ENCODE measurements at regions of chr3 and their contacts with region 1.

Region 1: GRCh38 chr3:187738331-187739093 is 6.8 kb downstream of the BCL6 start:
- DNase-seq: peak; percentile 85
- H3K4me3 Mint-ChIP-seq: peak overlapping the region; percentile 86
- H3K27ac Mint-ChIP-seq: peak overlapping the region; percentile 97
- H3K4me1 Mint-ChIP-seq: peaks cover 35% of the 10 kb centered on the region
- H3K27me3 Mint-ChIP-seq: no peaks in the 10 kb centered on the region

Region 2: GRCh38 chr3:187684880-187685279 is 53.6 kb before region 1 on chr3:
- CTCF ChIA-PET with region 1: no interaction called
- intact Hi-C with region 1: no loop called
- DNase-seq: no peak
- H3K4me3 Mint-ChIP-seq: no peak overlapping the region
- H3K27ac Mint-ChIP-seq: no peak overlapping the region
- H3K4me1 Mint-ChIP-seq: peaks cover 6% of the 10 kb centered on the region
- H3K27me3 Mint-ChIP-seq: peaks cover 29% of the 10 kb centered on the region

Region 3: DNA sequence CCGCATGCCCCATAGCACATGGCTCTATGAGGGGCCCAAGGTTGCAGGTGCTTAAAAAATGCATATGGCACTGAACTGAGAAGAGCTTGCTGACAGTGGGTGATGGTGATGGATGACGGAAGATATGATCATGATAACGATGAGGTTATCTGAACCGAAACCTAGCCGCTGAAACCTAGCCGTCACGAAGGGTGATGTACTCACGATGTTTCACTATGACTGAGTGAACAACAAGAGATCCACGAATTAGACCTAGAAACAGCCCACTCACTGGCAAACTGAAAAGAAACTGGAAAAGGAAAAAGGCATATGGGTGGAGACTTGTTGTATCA is 64.4 kb after region 1 on chr3:
- CTCF ChIA-PET with region 1: interaction called, 21 read pairs
- intact Hi-C with region 1: no loop called
- DNase-seq: peak; percentile 89
- H3K4me3 Mint-ChIP-seq: peak overlapping the region; percentile 1
- H3K27ac Mint-ChIP-seq: peak overlapping the region; percentile 79
- H3K4me1 Mint-ChIP-seq: peaks cover 95% of the 10 kb centered on the region
- H3K27me3 Mint-ChIP-seq: no peaks in the 10 kb centered on the region

Region 4: GRCh38 chr3:188061133-188061532 is 322.6 kb after region 1 on chr3:
- CTCF ChIA-PET with region 1: interaction called, 20 read pairs
- intact Hi-C with region 1: loop called (anchors 1 kb)
- DNase-seq: peak; percentile 74
- H3K4me3 Mint-ChIP-seq: no peak overlapping the region
- H3K27ac Mint-ChIP-seq: peak overlapping the region; percentile 68
- H3K4me1 Mint-ChIP-seq: peaks cover 32% of the 10 kb centered on the region
- H3K27me3 Mint-ChIP-seq: no peaks in the 10 kb centered on the region

Region 5: GRCh38 chr3:188294823-188295487 is 556.4 kb after region 1 on chr3:
- CTCF ChIA-PET with region 1: interaction called, 3 read pairs
- intact Hi-C with region 1: loop called (anchors 1 kb)
- DNase-seq: peak; percentile 49
- H3K4me3 Mint-ChIP-seq: no peak overlapping the region
- H3K27ac Mint-ChIP-seq: peak overlapping the region; percentile 69
- H3K4me1 Mint-ChIP-seq: peaks cover 85% of the 10 kb centered on the region
- H3K27me3 Mint-ChIP-seq: no peaks in the 10 kb centered on the region

Region 6: DNA sequence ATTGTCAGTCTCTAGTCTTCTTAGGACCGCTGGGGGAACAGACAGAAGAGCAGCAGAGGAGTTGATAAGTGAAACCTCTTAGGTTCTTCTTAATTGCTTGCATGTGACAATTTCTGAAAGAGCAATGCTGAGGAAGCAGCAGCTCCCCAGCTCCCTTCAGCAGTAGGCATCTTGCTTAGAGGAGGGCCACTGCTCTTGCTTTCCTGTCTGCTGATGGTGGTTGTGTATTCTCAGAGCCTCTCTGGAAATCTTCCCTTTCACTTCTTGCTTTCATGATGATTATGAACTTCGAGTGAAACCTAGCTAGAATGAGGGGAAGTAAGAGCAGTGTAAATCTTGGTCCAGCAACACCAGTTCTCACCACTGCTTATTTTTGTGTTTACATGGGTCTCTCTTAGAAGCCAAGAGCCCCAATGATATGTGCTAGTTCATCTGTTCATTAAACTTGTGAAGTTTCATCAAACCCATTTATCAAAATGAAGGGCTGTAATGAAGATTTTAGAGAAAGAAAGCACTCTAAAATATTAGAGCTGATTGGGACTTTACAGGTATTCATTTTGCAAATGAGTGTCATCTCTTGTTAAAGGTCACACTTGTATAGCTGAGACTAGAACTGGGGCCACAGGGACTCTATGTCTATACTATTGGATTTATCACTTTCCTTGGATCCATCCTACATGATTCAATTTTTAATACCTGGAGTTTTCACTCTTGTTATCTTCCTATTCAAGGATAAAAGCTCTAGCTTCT is 662.2 kb after region 1 on chr3:
- CTCF ChIA-PET with region 1: interaction called, 9 read pairs
- intact Hi-C with region 1: loop called (anchors 2 kb)
- DNase-seq: peak; percentile 60
- H3K4me3 Mint-ChIP-seq: no peak overlapping the region
- H3K27ac Mint-ChIP-seq: peak overlapping the region; percentile 43
- H3K4me1 Mint-ChIP-seq: peaks cover 70% of the 10 kb centered on the region
- H3K27me3 Mint-ChIP-seq: no peaks in the 10 kb centered on the region

Region 7: GRCh38 chr3:188749010-188749617 is 1010.6 kb after region 1 on chr3:
- CTCF ChIA-PET with region 1: interaction called, 13 read pairs
- intact Hi-C with region 1: loop called (anchors 1 kb)
- DNase-seq: peak; percentile 66
- H3K4me3 Mint-ChIP-seq: no peak overlapping the region
- H3K27ac Mint-ChIP-seq: no peak overlapping the region
- H3K4me1 Mint-ChIP-seq: peaks cover 29% of the 10 kb centered on the region
- H3K27me3 Mint-ChIP-seq: no peaks in the 10 kb centered on the region

Region 8: GRCh38 chr3:189148081-189148507 is 1409.6 kb after region 1 on chr3:
- CTCF ChIA-PET with region 1: interaction called, 5 read pairs
- intact Hi-C with region 1: loop called (anchors 1 kb)
- DNase-seq: peak; percentile 85
- H3K4me3 Mint-ChIP-seq: no peak overlapping the region
- H3K27ac Mint-ChIP-seq: no peak overlapping the region
- H3K4me1 Mint-ChIP-seq: peaks cover 9% of the 10 kb centered on the region
- H3K27me3 Mint-ChIP-seq: peaks cover 9% of the 10 kb centered on the region